T-cell (primary cell): ENCODE measurements at regions of chr22 and their contacts with region 1.

Region 1: GRCh38 chr22:39170825-39171622 is 18.5 kb upstream of the CBX7 start:
- DNase-seq: peak; percentile 52 to 90 (median 75)
- ATAC-seq: peak; percentile 72 to 79 (median 76)
- H3K4me3 ChIP-seq: peak overlapping the region; percentile 10 to 36
- H3K4me3 Mint-ChIP-seq: peak overlapping the region; percentile 51 to 73 (median 72)
- H3K27ac ChIP-seq: peak overlapping the region; percentile 63
- H3K27ac Mint-ChIP-seq: peak overlapping the region; percentile 92 to 93
- H3K4me1 ChIP-seq: peaks cover 25 to 56% of the 10 kb centered on the region in 2 experiments
- H3K4me1 Mint-ChIP-seq: peaks cover 45 to 51% (median 50%) of the 10 kb centered on the region in 3 donors
- H3K27me3 ChIP-seq: peaks cover 0 to 9% of the 10 kb centered on the region in 2 experiments
- H3K27me3 Mint-ChIP-seq: peaks cover 0 to 2% of the 10 kb centered on the region in 2 donors

Region 2: DNA sequence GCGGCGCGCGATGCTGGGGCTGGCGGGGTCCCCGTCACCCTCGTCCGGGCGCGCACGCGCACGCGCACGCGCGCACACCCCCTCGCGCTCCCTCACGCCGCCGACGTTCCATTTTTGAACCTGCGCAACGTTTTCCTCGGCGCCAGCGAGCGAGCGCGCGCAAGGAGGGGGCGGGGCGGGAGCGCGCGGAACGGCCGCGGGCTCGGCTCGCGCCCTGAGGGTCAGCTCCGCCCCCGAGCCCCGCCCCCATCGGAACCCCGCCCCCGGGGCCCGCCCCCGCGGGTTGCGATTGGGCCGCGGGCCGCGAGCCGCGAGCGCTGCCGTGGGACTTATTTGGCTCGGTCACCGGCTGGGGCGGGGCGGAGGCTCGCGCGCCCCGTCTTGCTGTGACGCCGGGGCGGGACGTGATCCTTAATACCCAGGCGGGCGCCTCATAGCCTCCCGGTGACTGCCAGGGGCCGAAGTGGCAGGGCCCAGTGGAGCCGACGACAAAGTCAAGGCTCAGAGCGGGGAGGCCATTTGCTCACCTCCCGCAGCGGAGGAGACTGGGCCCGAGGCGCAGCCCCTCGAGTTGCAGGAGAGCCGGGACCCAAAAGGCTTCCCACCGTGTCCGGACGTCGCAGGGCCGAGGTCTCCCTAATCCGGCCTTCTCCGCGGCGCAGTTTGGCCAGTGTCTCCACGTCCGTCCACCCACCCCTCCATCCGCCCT is 18.4 kb before region 1 on chr22 and contains the start of gene CBX7:
- CTCF ChIA-PET with region 1: interaction called, 3 to 10 read pairs
- POLR2A ChIA-PET with region 1: no interaction called
- DNase-seq: peak; percentile 82 to 99 (median 91)
- ATAC-seq: peak; percentile 85 to 90 (median 87)
- H3K4me3 ChIP-seq: peak within 1 kb of the TSS; percentile 77 to 86
- H3K4me3 Mint-ChIP-seq: peak within 1 kb of the TSS; percentile 82 to 91 (median 86)
- H3K27ac ChIP-seq: peak within 1 kb of the TSS; percentile 86
- H3K27ac Mint-ChIP-seq: peak within 1 kb of the TSS; percentile 89 to 91
- H3K4me1 ChIP-seq: peaks cover 4 to 55% of the 10 kb centered on the region in 2 experiments
- H3K4me1 Mint-ChIP-seq: peaks cover 38 to 46% (median 44%) of the 10 kb centered on the region in 3 donors
- H3K27me3 ChIP-seq: peaks cover 0 to 4% of the 10 kb centered on the region in 2 experiments
- H3K27me3 Mint-ChIP-seq: no peaks in the 10 kb centered on the region
- total RNA-seq, gene CBX7: 67.4 to 160 (median 149) TPM

Region 3: GRCh38 chr22:39251762-39252460 is 80.9 kb after region 1 on chr22:
- CTCF ChIA-PET with region 1: no interaction called
- POLR2A ChIA-PET with region 1: no interaction called
- DNase-seq: no peak
- ATAC-seq: no peak
- H3K4me3 ChIP-seq: no peak overlapping the region
- H3K4me3 Mint-ChIP-seq: peak overlapping the region in 1 of 3 donors; percentile 17
- H3K27ac ChIP-seq: no peak overlapping the region
- H3K27ac Mint-ChIP-seq: no peak overlapping the region
- H3K4me1 ChIP-seq: peaks cover 2 to 31% of the 10 kb centered on the region in 2 experiments
- H3K4me1 Mint-ChIP-seq: peaks cover 19 to 41% (median 19%) of the 10 kb centered on the region in 3 donors
- H3K27me3 ChIP-seq: peaks cover 11 to 81% of the 10 kb centered on the region in 2 experiments
- H3K27me3 Mint-ChIP-seq: peaks cover 25 to 34% of the 10 kb centered on the region in 2 donors

Region 4: DNA sequence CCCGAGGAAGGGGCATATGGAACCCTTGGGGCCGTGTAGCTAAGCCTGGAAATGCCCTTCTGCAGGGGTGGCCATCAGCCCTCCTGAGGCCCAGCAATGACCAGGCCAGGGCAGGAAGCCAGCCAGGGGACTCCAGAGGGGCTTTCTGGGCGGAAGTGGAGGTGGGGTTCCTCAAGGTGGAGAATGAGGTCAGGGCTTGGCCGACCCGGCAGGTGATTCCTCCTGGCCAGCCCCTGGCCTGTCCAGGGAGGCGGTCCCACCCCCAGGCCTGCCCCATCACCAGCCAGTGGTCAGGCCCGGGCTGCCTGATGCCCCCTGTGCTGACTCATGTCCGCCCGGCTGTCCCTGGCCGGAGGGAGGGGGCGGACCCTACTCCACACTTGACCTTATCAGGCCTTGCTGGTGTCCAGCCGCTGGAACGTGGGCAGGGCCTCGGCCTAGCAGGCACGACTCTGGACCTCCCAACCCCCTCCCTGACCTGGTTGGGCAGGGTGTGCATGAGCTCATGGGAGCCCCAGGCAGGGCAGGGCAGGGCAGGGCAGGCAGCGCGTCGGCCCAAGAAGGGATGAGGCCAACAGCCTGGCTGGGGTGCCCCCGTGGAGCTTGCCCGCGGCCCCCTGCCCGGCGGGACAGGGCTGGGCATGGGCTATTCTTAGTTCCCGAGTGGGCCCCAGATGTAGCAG is 112.4 kb after region 1 on chr22:
- CTCF ChIA-PET with region 1: interaction called in 1 of 2 experiments, 13 read pairs
- POLR2A ChIA-PET with region 1: no interaction called
- DNase-seq: no peak
- ATAC-seq: no peak
- H3K4me3 ChIP-seq: no peak overlapping the region
- H3K4me3 Mint-ChIP-seq: no peak overlapping the region
- H3K27ac ChIP-seq: no peak overlapping the region
- H3K27ac Mint-ChIP-seq: no peak overlapping the region
- H3K4me1 ChIP-seq: no peaks in the 10 kb centered on the region
- H3K4me1 Mint-ChIP-seq: peaks cover 6 to 15% (median 9%) of the 10 kb centered on the region in 3 donors
- H3K27me3 ChIP-seq: peaks cover 0 to 40% of the 10 kb centered on the region in 2 experiments
- H3K27me3 Mint-ChIP-seq: peaks cover 0 to 15% of the 10 kb centered on the region in 2 donors

Region 5: GRCh38 chr22:39306581-39307361 is 135.7 kb after region 1 on chr22:
- CTCF ChIA-PET with region 1: interaction called, 12 to 22 read pairs
- POLR2A ChIA-PET with region 1: no interaction called
- DNase-seq: peak in 23 of 35 experiments; percentile 22 to 70 (median 42)
- ATAC-seq: peak; percentile 48 to 62 (median 52)
- H3K4me3 ChIP-seq: no peak overlapping the region
- H3K4me3 Mint-ChIP-seq: no peak overlapping the region
- H3K27ac ChIP-seq: no peak overlapping the region
- H3K27ac Mint-ChIP-seq: no peak overlapping the region
- H3K4me1 ChIP-seq: peaks cover 0 to 25% of the 10 kb centered on the region in 2 experiments
- H3K4me1 Mint-ChIP-seq: peaks cover 15 to 25% (median 21%) of the 10 kb centered on the region in 3 donors
- H3K27me3 ChIP-seq: peaks cover 0 to 8% of the 10 kb centered on the region in 2 experiments
- H3K27me3 Mint-ChIP-seq: no peaks in the 10 kb centered on the region

Region 6: DNA sequence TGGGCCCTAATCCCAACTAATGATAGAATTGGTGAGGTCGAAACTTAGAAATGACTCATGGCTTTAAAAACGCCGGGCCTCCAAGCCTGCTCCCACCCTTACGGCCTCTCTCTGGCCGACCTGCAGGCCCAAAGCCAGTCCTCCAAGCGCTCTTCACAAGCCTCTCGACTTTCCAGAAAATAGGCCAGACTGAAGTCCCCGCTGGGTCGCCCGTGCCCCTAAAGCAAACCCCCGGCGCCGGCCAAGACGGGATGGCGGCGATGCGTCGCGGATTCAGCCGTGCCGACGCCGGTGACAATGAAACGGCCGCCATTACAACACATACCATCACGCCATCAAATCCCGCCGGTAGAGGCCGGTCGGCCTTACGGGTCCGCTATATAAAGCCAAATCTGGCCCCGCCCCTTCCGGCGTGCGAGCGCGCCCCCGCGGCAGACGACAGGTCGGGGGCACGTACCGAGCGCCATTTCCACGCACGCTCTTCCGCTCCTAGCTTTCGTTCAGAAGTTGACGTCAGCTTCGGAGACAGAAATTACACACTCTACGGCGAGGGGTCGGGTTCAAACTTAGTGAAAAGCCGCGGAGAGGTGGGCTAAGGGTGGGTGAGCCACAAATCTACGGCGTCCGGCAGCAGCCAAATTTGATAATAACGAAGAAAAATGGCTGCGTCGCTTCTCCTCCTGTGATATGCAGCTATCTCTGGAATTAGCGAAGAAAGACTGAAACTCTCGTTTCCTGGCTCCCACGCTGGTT is 148.4 kb after region 1 on chr22 and contains the start of gene RPL3:
- CTCF ChIA-PET with region 1: interaction called, 6 to 55 read pairs
- POLR2A ChIA-PET with region 1: interaction called, 5 to 12 read pairs
- DNase-seq: peak; percentile 93 to 99 (median 96)
- ATAC-seq: peak; percentile 83 to 89 (median 86)
- H3K4me3 ChIP-seq: peak within 1 kb of the TSS; percentile 71 to 91
- H3K4me3 Mint-ChIP-seq: peak within 1 kb of the TSS; percentile 98 to 100 (median 99)
- H3K27ac ChIP-seq: peak within 1 kb of the TSS; percentile 88
- H3K27ac Mint-ChIP-seq: peak within 1 kb of the TSS; percentile 98 to 99
- H3K4me1 ChIP-seq: peaks cover 10 to 56% of the 10 kb centered on the region in 2 experiments
- H3K4me1 Mint-ChIP-seq: peaks cover 34 to 54% (median 43%) of the 10 kb centered on the region in 3 donors
- H3K27me3 ChIP-seq: no peaks in the 10 kb centered on the region
- H3K27me3 Mint-ChIP-seq: no peaks in the 10 kb centered on the region
- total RNA-seq, gene RPL3: 3,304 to 3,660 (median 3,479) TPM